Caco-2 (cell line): ENCODE measurements at regions of chr4 and their contacts with region 1.

Region 1: DNA sequence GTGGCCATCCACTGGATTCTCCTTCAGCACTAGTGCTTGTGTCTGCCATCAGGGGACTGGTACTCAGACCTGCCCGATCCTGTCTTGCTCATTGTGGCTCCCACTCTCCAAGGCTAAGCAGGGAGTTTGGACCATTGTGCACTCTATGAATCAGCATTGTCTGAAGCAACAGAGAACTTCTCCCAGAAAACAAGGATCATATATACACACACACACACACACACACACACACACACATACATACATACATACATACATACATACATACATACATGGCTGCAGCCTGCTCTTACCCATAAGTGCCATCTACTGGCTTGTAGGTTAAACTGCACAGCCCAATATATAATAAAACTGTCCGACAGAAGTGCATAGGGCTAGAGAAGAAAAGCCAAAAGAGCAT is 345.3 kb upstream of the LCORL start:
- DNase-seq: peak in 1 of 2 experiments; percentile 19
- H3K4me3 ChIP-seq: no peak overlapping the region
- H3K4me3 Mint-ChIP-seq: no peak overlapping the region
- H3K27ac Mint-ChIP-seq: no peak overlapping the region
- H3K4me1 ChIP-seq: peaks cover 5% of the 10 kb centered on the region; the same call in 1 of the 2 replicates
- H3K4me1 Mint-ChIP-seq: no peaks in the 10 kb centered on the region
- H3K27me3 ChIP-seq: no peaks in the 10 kb centered on the region
- H3K27me3 Mint-ChIP-seq: no peaks in the 10 kb centered on the region
- CTCF ChIP-seq: peak; percentile 51 to 60

Region 2: DNA sequence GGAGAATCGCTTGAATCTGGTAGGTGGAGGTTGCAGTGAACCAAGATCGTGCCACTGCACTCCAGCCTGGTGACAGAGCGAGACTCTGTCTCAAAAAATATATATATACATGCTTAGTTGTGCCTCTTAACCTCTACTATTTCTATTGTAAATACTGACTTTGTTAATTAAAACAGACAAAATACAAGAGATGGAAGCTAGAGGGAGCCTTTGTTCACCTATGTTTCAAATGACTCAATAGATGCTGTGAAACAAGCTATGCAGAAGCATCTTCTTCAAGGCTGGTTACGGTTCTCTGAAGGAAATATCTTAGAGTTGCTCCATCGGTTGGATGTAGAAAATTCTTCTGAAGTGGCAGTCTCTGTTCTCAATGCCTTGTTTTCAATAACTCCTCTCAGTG is 549.9 kb before region 1 on chr4:
- CTCF ChIA-PET with region 1: no interaction called
- POLR2A ChIA-PET with region 1: no interaction called
- intact Hi-C with region 1: loop called (anchors 1 kb)
- DNase-seq: peak in 1 of 2 experiments; percentile 18
- H3K4me3 ChIP-seq: no peak overlapping the region
- H3K4me3 Mint-ChIP-seq: no peak overlapping the region
- H3K27ac Mint-ChIP-seq: no peak overlapping the region
- H3K4me1 ChIP-seq: peaks cover 5% of the 10 kb centered on the region; the same call in 1 of the 2 replicates
- H3K4me1 Mint-ChIP-seq: peaks cover 4% of the 10 kb centered on the region
- H3K27me3 ChIP-seq: no peaks in the 10 kb centered on the region
- H3K27me3 Mint-ChIP-seq: no peaks in the 10 kb centered on the region
- CTCF ChIP-seq: peak; percentile 17 to 38

Region 3: GRCh38 chr4:17934286-17934685 is 432.6 kb before region 1 on chr4:
- CTCF ChIA-PET with region 1: no interaction called
- POLR2A ChIA-PET with region 1: no interaction called
- intact Hi-C with region 1: loop called (anchors 5 kb)
- DNase-seq: no peak
- H3K4me3 ChIP-seq: no peak overlapping the region
- H3K4me3 Mint-ChIP-seq: no peak overlapping the region
- H3K27ac Mint-ChIP-seq: no peak overlapping the region
- H3K4me1 ChIP-seq: no peaks in the 10 kb centered on the region
- H3K4me1 Mint-ChIP-seq: no peaks in the 10 kb centered on the region
- H3K27me3 ChIP-seq: no peaks in the 10 kb centered on the region
- H3K27me3 Mint-ChIP-seq: no peaks in the 10 kb centered on the region
- CTCF ChIP-seq: no peak

Region 4: DNA sequence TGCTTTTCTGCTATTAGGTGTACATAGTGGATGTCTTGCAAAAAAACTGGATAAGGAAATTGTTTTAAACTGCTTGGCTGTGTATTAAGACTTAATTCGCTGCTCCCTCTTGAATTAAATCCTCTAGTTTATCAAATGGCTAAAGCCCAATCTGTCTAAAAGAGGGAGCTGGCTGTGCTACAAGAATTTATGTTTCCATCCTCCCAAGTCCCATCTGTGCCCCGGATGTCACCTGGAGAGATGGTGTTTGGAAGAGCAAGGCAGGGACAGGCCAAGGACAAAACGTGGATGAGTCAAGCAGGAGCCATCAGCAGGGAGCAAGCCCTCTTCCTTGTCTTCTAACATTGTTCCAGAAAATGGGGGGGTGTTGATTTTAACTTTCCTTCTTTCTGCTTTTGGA is 174.0 kb before region 1 on chr4:
- CTCF ChIA-PET with region 1: no interaction called
- POLR2A ChIA-PET with region 1: no interaction called
- intact Hi-C with region 1: loop called (anchors 10 kb)
- DNase-seq: no peak
- H3K4me3 ChIP-seq: no peak overlapping the region
- H3K4me3 Mint-ChIP-seq: no peak overlapping the region
- H3K27ac Mint-ChIP-seq: no peak overlapping the region
- H3K4me1 ChIP-seq: no peaks in the 10 kb centered on the region
- H3K4me1 Mint-ChIP-seq: no peaks in the 10 kb centered on the region
- H3K27me3 ChIP-seq: no peaks in the 10 kb centered on the region
- H3K27me3 Mint-ChIP-seq: peaks cover 2% of the 10 kb centered on the region
- CTCF ChIP-seq: no peak

Region 5: GRCh38 chr4:18593445-18594002 is 226.6 kb after region 1 on chr4:
- CTCF ChIA-PET with region 1: no interaction called
- POLR2A ChIA-PET with region 1: no interaction called
- intact Hi-C with region 1: loop called (anchors 10 kb)
- DNase-seq: peak; percentile 48 to 61
- H3K4me3 ChIP-seq: no peak overlapping the region
- H3K4me3 Mint-ChIP-seq: peak overlapping the region; percentile 29
- H3K27ac Mint-ChIP-seq: no peak overlapping the region
- H3K4me1 ChIP-seq: no peaks in the 10 kb centered on the region
- H3K4me1 Mint-ChIP-seq: peaks cover 5% of the 10 kb centered on the region
- H3K27me3 ChIP-seq: no peaks in the 10 kb centered on the region
- H3K27me3 Mint-ChIP-seq: peaks cover 11% of the 10 kb centered on the region
- CTCF ChIP-seq: peak; percentile 61 to 69